GM18951 (cell line): ENCODE measurements at regions of chr13 and their contacts with region 1.

Region 1: GRCh38 chr13:97359181-97360057 is 74.5 kb upstream of the RAP2A start:
- POLR2A ChIP-seq: no peak

Region 2: DNA sequence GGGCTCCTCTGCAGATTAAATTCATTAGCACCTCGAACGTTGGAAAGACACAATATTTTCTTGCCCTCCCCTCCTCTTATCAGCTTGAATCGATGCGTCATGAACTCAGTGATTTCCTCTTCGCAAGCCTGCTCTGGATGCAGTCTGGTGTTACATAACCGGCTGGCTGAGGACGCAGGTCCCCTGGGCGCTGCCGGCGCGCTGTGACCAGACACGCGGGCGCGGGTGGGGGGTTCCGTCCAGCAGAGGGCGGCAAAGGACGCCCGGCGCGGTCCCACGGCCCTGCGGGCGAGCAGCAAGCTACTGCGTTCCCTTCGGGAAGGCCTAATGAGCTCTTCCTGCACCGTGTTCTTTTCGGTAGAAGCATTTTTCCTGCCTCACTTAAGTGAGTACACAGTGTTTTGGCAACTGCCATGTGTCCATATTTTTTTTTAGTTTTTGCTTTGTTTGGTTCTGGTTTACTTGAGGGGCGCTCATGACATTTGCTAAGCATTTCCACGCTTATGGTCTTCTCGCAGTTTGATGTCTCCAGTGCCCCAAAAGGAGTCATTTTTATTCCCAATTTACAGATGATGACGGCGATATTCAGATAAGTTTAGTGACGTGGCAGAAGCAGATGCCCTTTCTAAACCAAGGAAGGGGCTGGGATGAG is 249.5 kb before region 1 on chr13:
- in situ Hi-C with region 1: loop called (anchors 10 kb)
- POLR2A ChIP-seq: no peak

Region 3: DNA sequence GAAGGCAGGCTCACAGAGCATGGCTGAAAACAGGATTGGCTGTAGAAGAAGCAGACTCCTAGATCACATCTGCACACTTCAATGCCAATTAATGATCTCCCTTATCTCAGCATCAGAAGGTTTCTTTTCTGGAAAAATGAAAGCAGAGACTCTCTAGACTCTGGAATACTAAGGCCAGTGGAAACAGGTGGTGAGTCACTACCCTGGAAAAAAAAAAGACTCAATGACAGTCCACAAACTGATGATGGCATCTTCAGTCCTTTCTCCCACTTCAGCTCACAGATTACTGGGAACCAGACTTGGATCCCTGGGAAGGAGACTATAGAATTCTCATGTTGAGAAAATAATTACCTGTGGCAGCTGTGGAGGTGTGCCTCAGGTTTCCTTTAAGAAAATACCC is 184.8 kb before region 1 on chr13:
- in situ Hi-C with region 1: no loop called
- POLR2A ChIP-seq: no peak

Region 4: DNA sequence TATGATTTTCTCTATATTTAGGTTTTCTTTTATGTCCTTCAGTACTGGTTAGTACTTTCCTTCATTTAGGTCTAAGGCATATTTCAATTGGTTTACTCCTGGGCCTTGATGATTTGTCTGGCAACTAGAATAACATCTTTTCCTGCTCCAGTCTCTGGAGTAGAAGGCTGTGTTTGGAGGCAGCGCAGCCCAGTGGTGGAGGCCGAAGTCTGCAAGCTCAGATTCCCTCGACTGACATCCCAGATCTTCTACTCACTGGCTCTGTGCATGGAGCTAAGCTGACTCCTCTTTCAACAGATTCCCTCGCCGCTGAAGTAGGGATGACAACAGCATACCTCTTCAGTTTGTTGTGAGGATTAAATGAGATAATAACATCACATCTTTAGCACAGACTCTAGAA is 215.5 kb after region 1 on chr13:
- in situ Hi-C with region 1: no loop called
- POLR2A ChIP-seq: no peak